ENCODE measurements at regions of chr2 and their contacts with region 1.

Region 1: GRCh38 chr2:88600038-88600465 is 27.2 kb downstream of the EIF2AK3 start:
- DNase-seq: peak; percentile 60
- H3K4me3 Mint-ChIP-seq: no peak overlapping the region
- H3K27ac Mint-ChIP-seq: peak overlapping the region; percentile 29
- H3K4me1 Mint-ChIP-seq: peaks cover 34% of the 10 kb centered on the region
- H3K27me3 Mint-ChIP-seq: no peaks in the 10 kb centered on the region

Region 2: GRCh38 chr2:88638743-88639142 is 38.7 kb after region 1 on chr2:
- CTCF ChIA-PET with region 1: no interaction called
- POLR2A ChIA-PET with region 1: no interaction called
- intact Hi-C with region 1: loop called (anchors 1 kb)
- DNase-seq: peak; percentile 42
- H3K4me3 Mint-ChIP-seq: no peak overlapping the region
- H3K27ac Mint-ChIP-seq: no peak overlapping the region
- H3K4me1 Mint-ChIP-seq: peaks cover 19% of the 10 kb centered on the region
- H3K27me3 Mint-ChIP-seq: no peaks in the 10 kb centered on the region

Region 3: DNA sequence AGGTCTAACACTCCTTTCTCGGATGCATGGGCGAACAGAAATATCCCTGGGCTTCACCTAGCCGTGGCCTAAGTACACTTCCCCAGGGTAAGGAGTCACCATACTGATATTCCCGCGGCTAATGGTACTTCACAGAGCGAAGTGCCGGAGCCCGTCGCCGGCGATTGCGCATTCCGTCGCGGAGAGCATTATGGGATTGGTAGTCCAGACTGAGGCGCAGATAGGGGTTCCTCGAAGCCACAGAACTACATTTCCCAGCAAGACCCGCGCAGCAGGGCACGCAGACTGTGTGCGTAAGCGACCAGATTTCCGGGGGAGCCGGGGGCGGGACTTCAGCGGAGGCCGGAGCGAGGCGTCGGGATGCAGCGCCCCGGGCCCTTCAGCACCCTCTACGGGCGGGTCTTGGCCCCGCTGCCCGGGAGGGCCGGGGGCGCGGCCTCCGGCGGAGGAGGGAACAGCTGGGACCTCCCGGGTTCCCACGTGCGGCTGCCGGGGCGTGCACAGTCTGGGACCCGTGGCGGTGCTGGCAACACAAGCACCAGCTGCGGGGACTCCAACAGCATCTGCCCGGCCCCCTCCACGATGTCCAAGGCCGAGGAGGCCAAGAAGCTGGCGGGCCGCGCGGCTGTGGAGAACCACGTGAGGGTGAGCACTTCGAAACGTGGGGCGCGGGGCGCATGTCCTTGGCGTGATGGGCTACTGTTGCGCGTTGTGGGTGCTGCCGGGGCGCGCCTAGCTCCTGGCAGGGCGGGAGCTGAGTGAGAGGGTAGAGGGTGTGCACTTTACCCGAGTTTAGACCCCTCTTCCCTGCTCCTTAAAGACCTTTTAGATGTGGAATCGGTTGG is 91.5 kb after region 1 on chr2 and contains the start of gene RPIA:
- CTCF ChIA-PET with region 1: interaction called, 4 read pairs
- POLR2A ChIA-PET with region 1: interaction called, 7 read pairs
- intact Hi-C with region 1: loop called (anchors 1 kb)
- DNase-seq: peak; percentile 99
- H3K4me3 Mint-ChIP-seq: peak within 1 kb of the TSS; percentile 91
- H3K27ac Mint-ChIP-seq: peak within 1 kb of the TSS; percentile 89
- H3K4me1 Mint-ChIP-seq: peaks cover 34% of the 10 kb centered on the region
- H3K27me3 Mint-ChIP-seq: no peaks in the 10 kb centered on the region
- total RNA-seq, gene RPIA: 50.7 to 52.7 TPM

Region 4: GRCh38 chr2:88808652-88809051 is 208.6 kb after region 1 on chr2:
- CTCF ChIA-PET with region 1: no interaction called
- POLR2A ChIA-PET with region 1: no interaction called
- intact Hi-C with region 1: no loop called
- DNase-seq: no peak
- H3K4me3 Mint-ChIP-seq: no peak overlapping the region
- H3K27ac Mint-ChIP-seq: no peak overlapping the region
- H3K4me1 Mint-ChIP-seq: no peaks in the 10 kb centered on the region
- H3K27me3 Mint-ChIP-seq: peaks cover 11% of the 10 kb centered on the region